HepG2 (cell line): ENCODE measurements at regions of chr16 and their contacts with region 1.

Region 1: DNA sequence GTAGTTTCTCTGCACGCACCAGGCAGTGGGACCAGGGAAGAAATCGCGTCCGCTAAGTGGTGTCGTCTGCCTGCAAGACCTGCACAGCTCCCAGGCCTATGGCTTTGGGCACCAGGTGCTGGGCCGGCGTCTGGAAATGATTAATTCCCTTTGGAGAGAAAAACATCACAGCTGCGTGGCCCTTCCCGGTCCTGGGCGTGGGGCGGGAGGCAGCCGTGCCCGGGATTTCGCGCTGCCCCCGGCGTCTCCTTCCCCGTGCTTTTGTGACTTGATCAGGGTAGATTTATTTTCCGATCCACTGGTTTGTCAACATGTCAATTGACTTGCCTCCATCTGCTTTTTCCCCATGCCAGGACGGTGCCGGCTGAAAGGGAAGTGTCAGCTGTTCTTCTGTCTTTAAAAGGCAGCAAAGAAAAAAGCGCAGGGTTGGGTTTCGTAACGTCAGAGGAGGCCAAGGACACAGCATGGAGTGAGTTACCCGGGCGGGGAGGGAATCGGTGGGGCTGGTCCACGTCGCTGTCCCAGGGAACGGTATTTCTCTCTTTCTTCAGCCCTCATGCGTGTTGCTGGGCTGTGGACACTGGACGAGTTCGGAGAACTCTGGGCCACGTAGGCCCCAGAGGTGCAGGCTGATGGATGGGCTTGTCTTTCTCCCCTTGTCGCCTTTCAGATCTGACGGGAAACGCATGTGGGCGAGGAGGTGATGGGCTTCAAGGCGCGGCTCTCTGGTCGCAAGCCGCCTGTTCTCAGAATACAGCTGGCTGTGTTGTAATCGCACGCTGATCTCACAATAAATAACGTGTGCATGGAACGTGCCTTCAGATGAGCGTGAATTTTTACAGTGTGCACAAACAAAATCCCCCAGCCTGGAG is 188.1 kb upstream of the ZNF469 start:
- DNase-seq: peak; percentile 19
- ATAC-seq: peak; percentile 31
- H3K4me3 ChIP-seq: no peak overlapping the region
- H3K27ac ChIP-seq: no peak overlapping the region
- H3K4me1 ChIP-seq: peaks cover 7% of the 10 kb centered on the region; the same call in 1 of the 2 replicates
- H3K27me3 ChIP-seq: peaks cover 14 to 51% of the 10 kb centered on the region in 2 experiments
- CTCF ChIP-seq: no peak
- EP300 ChIP-seq: no peak
- POLR2A ChIP-seq: no peak
- RAD21 ChIP-seq: no peak

Region 2: GRCh38 chr16:88306860-88307545 is 112.4 kb after region 1 on chr16:
- CTCF ChIA-PET with region 1: interaction called, 3 read pairs
- POLR2A ChIA-PET with region 1: no interaction called
- in situ Hi-C with region 1: loop called (anchors 5 kb)
- intact Hi-C with region 1: no loop called
- DNase-seq: peak; percentile 37
- ATAC-seq: no peak
- H3K4me3 ChIP-seq: no peak overlapping the region
- H3K27ac ChIP-seq: no peak overlapping the region
- H3K4me1 ChIP-seq: no peaks in the 10 kb centered on the region
- H3K27me3 ChIP-seq: peaks cover 13 to 71% of the 10 kb centered on the region in 2 experiments; a peak in 4 of 5 replicates
- CTCF ChIP-seq: no peak
- EP300 ChIP-seq: no peak
- POLR2A ChIP-seq: no peak
- RAD21 ChIP-seq: no peak

Region 3: GRCh38 chr16:88437373-88437964 is 242.8 kb after region 1 on chr16:
- CTCF ChIA-PET with region 1: no interaction called
- POLR2A ChIA-PET with region 1: no interaction called
- in situ Hi-C with region 1: loop called (anchors 10 kb)
- intact Hi-C with region 1: loop called (anchors 2 kb)
- DNase-seq: peak; percentile 48
- ATAC-seq: peak; percentile 64
- H3K4me3 ChIP-seq: no peak overlapping the region
- H3K27ac ChIP-seq: no peak overlapping the region
- H3K4me1 ChIP-seq: peaks cover 3% of the 10 kb centered on the region
- H3K27me3 ChIP-seq: peaks cover 58 to 97% of the 10 kb centered on the region in 2 experiments
- CTCF ChIP-seq: peak; percentile 94
- EP300 ChIP-seq: no peak
- POLR2A ChIP-seq: no peak
- RAD21 ChIP-seq: peak; percentile 88